Activated CD8-positive, alpha-beta memory T cell treated with anti-CD3 and anti-CD28 coated beads, Interleukin-2, amount 10 ng/mL, durations not matched to agents 7 days and 5 days (primary cell): ENCODE measurements at regions of chr6 and their contacts with region 1.

Region 1: GRCh38 chr6:53725791-53726431 is 60.4 kb upstream of the KLHL31 start:
- DNase-seq: peak; percentile 80
- ATAC-seq: peak; percentile 87
- H3K4me3 Mint-ChIP-seq: no peak overlapping the region
- H3K27ac Mint-ChIP-seq: no peak overlapping the region
- H3K4me1 Mint-ChIP-seq: peaks cover 13% of the 10 kb centered on the region
- H3K27me3 Mint-ChIP-seq: peaks cover 26% of the 10 kb centered on the region

Region 2: DNA sequence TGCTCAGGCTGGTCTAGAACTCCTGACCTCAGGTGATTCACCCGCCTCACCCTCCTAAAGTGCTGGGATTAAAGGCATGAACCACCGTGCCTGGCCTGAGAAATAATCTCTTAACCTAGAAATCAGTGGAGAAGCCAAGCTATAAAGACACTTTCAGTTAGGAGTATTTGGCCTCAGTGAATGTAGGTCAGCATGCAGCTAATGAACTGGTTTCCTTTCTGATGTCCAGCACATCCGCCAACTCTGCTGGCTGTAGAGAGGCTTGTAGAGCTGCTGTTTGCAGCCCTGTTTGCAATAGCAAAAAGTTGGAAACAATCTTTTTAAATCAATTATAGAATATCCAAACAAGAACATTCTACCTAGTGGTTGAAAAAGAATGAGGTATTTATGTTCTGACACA is 334.7 kb before region 1 on chr6:
- CTCF ChIA-PET with region 1: no interaction called
- DNase-seq: no peak
- ATAC-seq: no peak
- H3K4me3 Mint-ChIP-seq: no peak overlapping the region
- H3K27ac Mint-ChIP-seq: no peak overlapping the region
- H3K4me1 Mint-ChIP-seq: no peaks in the 10 kb centered on the region
- H3K27me3 Mint-ChIP-seq: peaks cover 11% of the 10 kb centered on the region

Region 3: GRCh38 chr6:53492860-53493634 is 232.9 kb before region 1 on chr6:
- CTCF ChIA-PET with region 1: interaction called, 168 read pairs
- DNase-seq: peak; percentile 46
- ATAC-seq: peak; percentile 89
- H3K4me3 Mint-ChIP-seq: no peak overlapping the region
- H3K27ac Mint-ChIP-seq: no peak overlapping the region
- H3K4me1 Mint-ChIP-seq: peaks cover 14% of the 10 kb centered on the region
- H3K27me3 Mint-ChIP-seq: peaks cover 6% of the 10 kb centered on the region

Region 4: GRCh38 chr6:53651764-53652401 is 74.0 kb before region 1 on chr6:
- CTCF ChIA-PET with region 1: interaction called, 32 read pairs
- DNase-seq: peak; percentile 88
- ATAC-seq: peak; percentile 95
- H3K4me3 Mint-ChIP-seq: peak overlapping the region; percentile 85
- H3K27ac Mint-ChIP-seq: peak overlapping the region; percentile 91
- H3K4me1 Mint-ChIP-seq: peaks cover 38% of the 10 kb centered on the region
- H3K27me3 Mint-ChIP-seq: peaks cover 7% of the 10 kb centered on the region

Region 5: GRCh38 chr6:53701333-53702218 is 24.3 kb before region 1 on chr6:
- CTCF ChIA-PET with region 1: interaction called, 26 read pairs
- DNase-seq: peak; percentile 59
- ATAC-seq: peak; percentile 83
- H3K4me3 Mint-ChIP-seq: no peak overlapping the region
- H3K27ac Mint-ChIP-seq: peak overlapping the region; percentile 18
- H3K4me1 Mint-ChIP-seq: peaks cover 13% of the 10 kb centered on the region
- H3K27me3 Mint-ChIP-seq: no peaks in the 10 kb centered on the region

Region 6: GRCh38 chr6:53794720-53795253 is 68.9 kb after region 1 on chr6 and contains the start of gene LRRC1:
- CTCF ChIA-PET with region 1: interaction called, 12 read pairs
- DNase-seq: peak; percentile 91
- ATAC-seq: peak; percentile 84
- H3K4me3 Mint-ChIP-seq: peak within 1 kb of the TSS; percentile 89
- H3K27ac Mint-ChIP-seq: peak within 1 kb of the TSS; percentile 83
- H3K4me1 Mint-ChIP-seq: peaks cover 24% of the 10 kb centered on the region
- H3K27me3 Mint-ChIP-seq: peaks cover 46% of the 10 kb centered on the region
- total RNA-seq, gene LRRC1: 4.5 to 4.6 TPM